WTC11 (cell line): ENCODE measurements at regions of chr1 and their contacts with region 1.

Region 1: DNA sequence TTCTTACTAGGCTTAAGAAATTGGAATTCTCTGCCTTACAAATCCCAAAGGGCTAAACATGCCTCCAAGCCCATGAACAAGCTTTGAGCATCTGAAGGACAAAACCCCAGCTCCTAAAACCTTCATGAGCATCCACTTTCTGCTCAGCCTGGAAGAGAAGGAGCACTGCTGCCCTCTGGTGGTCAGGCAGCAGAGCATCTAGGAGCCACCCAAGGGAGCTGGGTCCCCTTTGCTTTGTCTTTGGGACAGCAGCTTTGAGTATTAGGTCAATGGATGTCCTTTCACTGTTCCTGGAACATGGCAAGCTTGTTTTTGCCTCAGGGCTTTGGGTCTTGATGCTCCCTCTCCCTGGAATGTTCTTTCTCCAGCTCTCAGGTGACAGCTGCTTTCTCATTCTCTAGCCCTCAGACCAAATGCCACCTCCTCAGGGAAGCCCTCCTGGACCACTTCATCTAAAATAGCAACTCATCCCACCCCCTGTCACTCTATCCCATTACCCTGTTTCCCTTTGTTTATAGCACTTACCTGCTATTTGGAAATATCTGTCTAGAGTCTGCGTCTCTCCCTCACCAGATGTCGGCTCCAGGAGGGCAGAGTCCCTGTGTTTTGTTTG is 25.7 kb downstream of the RAB7B start:
- DNase-seq: peak; percentile 82
- ATAC-seq: peak; percentile 86
- H3K4me3 Mint-ChIP-seq: no peak overlapping the region
- H3K27ac Mint-ChIP-seq: no peak overlapping the region
- H3K4me1 Mint-ChIP-seq: peaks cover 5% of the 10 kb centered on the region; the same call in 1 of the 2 replicates
- H3K27me3 Mint-ChIP-seq: peaks cover 3% of the 10 kb centered on the region; the same call in 1 of the 2 replicates
- CTCF ChIP-seq: peak; percentile 93

Region 2: GRCh38 chr1:205711104-205712020 is 266.1 kb before region 1 on chr1:
- CTCF ChIA-PET with region 1: interaction called, 13 read pairs
- POLR2A ChIA-PET with region 1: no interaction called
- DNase-seq: peak; percentile 65
- ATAC-seq: peak; percentile 87
- H3K4me3 Mint-ChIP-seq: no peak overlapping the region
- H3K27ac Mint-ChIP-seq: peak overlapping the region; percentile 77
- H3K4me1 Mint-ChIP-seq: peaks cover 36% of the 10 kb centered on the region
- H3K27me3 Mint-ChIP-seq: no peaks in the 10 kb centered on the region
- CTCF ChIP-seq: peak; percentile 75

Region 3: DNA sequence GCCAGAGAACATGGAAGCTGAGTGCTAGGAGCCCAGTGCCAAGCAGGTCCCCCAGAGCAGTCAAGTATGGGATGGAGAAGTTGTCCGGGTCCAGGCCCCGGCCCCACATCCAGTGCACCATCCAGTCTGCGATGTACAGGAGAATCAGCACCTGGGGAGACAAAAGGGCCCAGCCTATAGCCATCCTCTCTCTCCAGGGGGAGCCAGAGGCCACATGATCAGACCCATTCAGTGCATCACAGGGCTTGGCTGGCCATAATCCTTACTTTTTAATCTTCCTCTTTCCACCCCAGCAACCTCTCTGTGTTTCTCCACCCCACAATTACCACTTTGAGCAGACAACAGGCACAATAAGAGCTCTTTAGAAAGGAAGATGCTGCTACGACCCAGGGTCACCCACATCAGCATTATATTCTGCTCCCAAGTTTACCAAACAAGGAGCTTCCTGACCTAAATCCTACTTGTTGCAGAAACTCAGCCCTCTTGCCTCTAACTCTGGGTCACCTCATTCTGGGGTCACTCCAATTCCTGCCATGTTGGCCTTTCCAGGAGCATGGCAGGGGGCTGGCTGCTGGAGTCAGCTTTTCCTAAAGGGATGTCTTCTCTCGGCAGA is 185.8 kb before region 1 on chr1:
- CTCF ChIA-PET with region 1: interaction called, 124 read pairs
- POLR2A ChIA-PET with region 1: no interaction called
- DNase-seq: peak; percentile 70
- ATAC-seq: peak; percentile 96
- H3K4me3 Mint-ChIP-seq: no peak overlapping the region
- H3K27ac Mint-ChIP-seq: no peak overlapping the region
- H3K4me1 Mint-ChIP-seq: 0 out of 2 replicates have a peak, but pooled peaks cover 6% of the 10 kb centered on the region
- H3K27me3 Mint-ChIP-seq: no peaks in the 10 kb centered on the region
- CTCF ChIP-seq: peak; percentile 73

Region 4: GRCh38 chr1:205849619-205850355 is 127.7 kb before region 1 on chr1 and contains the start of gene PM20D1:
- CTCF ChIA-PET with region 1: interaction called, 23 read pairs
- POLR2A ChIA-PET with region 1: no interaction called
- DNase-seq: peak; percentile 92
- ATAC-seq: peak; percentile 99
- H3K4me3 Mint-ChIP-seq: peak within 1 kb of the TSS; percentile 79
- H3K27ac Mint-ChIP-seq: no peak within 1 kb of the TSS
- H3K4me1 Mint-ChIP-seq: peaks cover 7% of the 10 kb centered on the region
- H3K27me3 Mint-ChIP-seq: peaks cover 36% of the 10 kb centered on the region
- CTCF ChIP-seq: no peak
- total RNA-seq, gene PM20D1: 0.23 to 0.37 TPM (median 0.32 TPM) in 3 replicates

Region 5: GRCh38 chr1:205933671-205934618 is 43.6 kb before region 1 on chr1:
- CTCF ChIA-PET with region 1: interaction called, 77 read pairs
- POLR2A ChIA-PET with region 1: no interaction called
- DNase-seq: no peak
- ATAC-seq: peak; percentile 66; the same call in 1 of the 2 replicates
- H3K4me3 Mint-ChIP-seq: no peak overlapping the region
- H3K27ac Mint-ChIP-seq: no peak overlapping the region
- H3K4me1 Mint-ChIP-seq: peaks cover 17% of the 10 kb centered on the region
- H3K27me3 Mint-ChIP-seq: peaks cover 4% of the 10 kb centered on the region; the same call in 1 of the 2 replicates
- CTCF ChIP-seq: no peak

Region 6: DNA sequence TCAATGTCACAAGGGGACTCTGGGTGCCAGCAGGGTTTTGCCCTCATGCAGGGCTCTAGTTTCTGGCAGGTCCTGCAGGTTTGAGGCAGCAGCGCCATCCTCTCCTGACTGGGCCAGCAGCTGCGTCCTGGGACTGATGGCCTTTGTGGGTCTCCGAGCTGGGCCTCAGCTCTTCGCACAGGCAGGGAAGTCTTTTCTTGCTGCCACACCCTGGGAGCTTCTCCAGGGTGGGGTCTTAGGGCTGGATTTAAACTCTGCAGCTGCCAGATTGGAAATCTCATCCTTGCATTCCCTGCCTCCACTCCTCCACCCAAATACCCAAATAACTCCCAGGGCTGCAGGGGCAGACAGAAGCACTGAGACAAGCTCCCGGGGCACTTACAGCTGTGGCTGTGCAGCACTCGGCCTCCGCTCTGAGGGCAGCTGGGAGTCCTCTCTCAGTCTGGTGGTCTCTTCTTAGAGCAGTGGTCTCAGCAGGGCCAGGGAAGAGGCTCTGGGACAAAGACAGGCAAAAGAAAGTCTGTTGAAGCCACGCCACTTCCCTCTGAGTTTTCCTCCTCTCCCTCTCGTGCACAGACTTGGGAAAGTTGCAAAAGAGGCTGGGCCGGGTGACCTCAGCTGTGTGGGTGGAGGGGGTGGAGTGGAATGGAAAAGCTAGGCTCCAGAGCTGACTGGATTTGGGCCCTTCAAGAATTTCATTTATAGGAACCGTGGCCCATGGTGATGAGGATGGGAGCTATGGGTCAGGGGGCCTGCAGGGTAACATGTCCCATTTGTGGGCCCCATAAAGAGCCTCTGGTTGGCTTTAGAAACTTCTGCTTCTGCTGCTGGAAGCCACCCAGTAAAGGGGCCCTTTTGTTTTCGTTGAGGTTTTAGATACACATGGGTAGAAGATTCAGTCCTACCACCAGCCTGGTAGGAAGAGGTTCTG is 25.6 kb after region 1 on chr1 and contains the start of gene RAB7B:
- CTCF ChIA-PET with region 1: interaction called, 23 read pairs
- POLR2A ChIA-PET with region 1: no interaction called
- DNase-seq: no peak
- ATAC-seq: no peak
- H3K4me3 Mint-ChIP-seq: no peak within 1 kb of the TSS
- H3K27ac Mint-ChIP-seq: no peak within 1 kb of the TSS
- H3K4me1 Mint-ChIP-seq: peaks cover 5% of the 10 kb centered on the region
- H3K27me3 Mint-ChIP-seq: peaks cover 22% of the 10 kb centered on the region
- CTCF ChIP-seq: no peak
- total RNA-seq, gene RAB7B: not detected in 3 replicates